ENCODE measurements at regions of chr22 and their contacts with region 1.

Region 1: GRCh38 chr22:37608477-37609239 is at the start of gene GGA1:
- DNase-seq: peak; percentile 97
- H3K4me3 Mint-ChIP-seq: peak within 1 kb of the TSS; percentile 87
- H3K27ac Mint-ChIP-seq: peak within 1 kb of the TSS; percentile 99
- H3K4me1 Mint-ChIP-seq: peaks cover 54% of the 10 kb centered on the region
- H3K27me3 Mint-ChIP-seq: no peaks in the 10 kb centered on the region
- total RNA-seq, gene GGA1: 59.0 to 61.1 TPM

Region 2: DNA sequence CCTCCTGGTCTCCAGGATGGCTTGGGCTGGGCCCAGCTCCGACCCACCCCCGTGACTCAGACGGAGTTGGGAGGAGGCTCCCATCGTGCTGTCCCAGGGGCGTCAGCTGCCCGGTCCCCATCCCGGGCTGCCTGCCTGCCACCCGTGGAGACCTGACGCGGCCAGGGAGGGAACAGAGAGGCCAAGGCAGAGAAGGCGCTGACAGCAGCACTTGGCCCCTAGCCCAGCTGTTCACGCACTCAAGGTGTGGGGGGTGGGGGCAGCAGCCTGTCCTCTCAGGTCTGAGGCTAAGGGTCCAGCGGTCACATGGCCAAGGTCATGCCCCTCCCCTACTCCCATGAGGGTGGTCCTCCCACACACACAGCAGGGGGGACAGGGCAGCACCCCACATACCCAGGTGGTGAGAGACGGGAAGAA is 230.0 kb before region 1 on chr22:
- CTCF ChIA-PET with region 1: no interaction called
- POLR2A ChIA-PET with region 1: no interaction called
- intact Hi-C with region 1: no loop called
- DNase-seq: no peak
- H3K4me3 Mint-ChIP-seq: no peak overlapping the region
- H3K27ac Mint-ChIP-seq: no peak overlapping the region
- H3K4me1 Mint-ChIP-seq: no peaks in the 10 kb centered on the region
- H3K27me3 Mint-ChIP-seq: peaks cover 33% of the 10 kb centered on the region

Region 3: DNA sequence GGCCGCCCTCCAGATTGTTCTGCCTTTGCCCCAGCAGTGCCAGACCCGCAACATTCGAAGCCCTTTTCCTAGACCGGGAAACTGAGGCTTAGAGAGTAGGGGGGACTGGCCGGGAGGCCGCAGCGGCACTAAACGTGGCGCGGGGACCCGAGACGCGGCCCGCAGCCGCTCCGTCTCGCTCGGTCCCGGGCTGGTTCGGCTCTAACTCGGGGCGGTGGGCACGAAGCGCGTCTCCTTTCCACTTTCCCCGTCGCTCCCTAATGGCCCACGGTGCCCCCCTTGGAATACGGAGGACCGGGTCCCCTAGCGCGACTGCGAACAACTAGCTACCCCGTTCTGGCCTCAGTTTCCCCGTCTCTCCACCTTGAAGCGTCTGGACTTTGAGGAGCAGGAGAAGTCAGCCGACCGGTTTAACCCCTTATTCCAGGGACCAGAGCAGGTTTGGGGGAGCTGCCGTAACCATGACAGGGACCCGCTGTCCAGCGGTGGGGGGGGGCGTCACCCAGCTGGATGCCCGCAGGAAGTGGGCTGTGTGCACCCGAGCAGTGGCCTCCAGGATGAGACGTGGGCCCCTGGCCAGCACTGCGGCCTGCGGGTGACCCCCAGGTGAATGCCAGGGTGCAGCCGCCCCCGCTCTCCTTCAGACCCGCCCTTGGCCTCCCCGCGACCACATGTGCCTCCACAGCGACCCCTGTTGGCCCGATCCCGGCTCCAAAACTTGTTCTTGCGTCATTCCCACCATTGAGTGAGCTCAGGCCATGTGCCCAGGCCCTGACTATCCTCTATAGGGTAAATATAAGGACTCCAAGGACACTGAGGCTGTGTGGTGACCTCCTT is 47.2 kb before region 1 on chr22:
- CTCF ChIA-PET with region 1: interaction called, 13 read pairs
- POLR2A ChIA-PET with region 1: interaction called, 3 read pairs
- intact Hi-C with region 1: no loop called
- DNase-seq: peak; percentile 91
- H3K4me3 Mint-ChIP-seq: peak overlapping the region; percentile 54
- H3K27ac Mint-ChIP-seq: no peak overlapping the region
- H3K4me1 Mint-ChIP-seq: peaks cover 29% of the 10 kb centered on the region
- H3K27me3 Mint-ChIP-seq: peaks cover 48% of the 10 kb centered on the region

Region 4: DNA sequence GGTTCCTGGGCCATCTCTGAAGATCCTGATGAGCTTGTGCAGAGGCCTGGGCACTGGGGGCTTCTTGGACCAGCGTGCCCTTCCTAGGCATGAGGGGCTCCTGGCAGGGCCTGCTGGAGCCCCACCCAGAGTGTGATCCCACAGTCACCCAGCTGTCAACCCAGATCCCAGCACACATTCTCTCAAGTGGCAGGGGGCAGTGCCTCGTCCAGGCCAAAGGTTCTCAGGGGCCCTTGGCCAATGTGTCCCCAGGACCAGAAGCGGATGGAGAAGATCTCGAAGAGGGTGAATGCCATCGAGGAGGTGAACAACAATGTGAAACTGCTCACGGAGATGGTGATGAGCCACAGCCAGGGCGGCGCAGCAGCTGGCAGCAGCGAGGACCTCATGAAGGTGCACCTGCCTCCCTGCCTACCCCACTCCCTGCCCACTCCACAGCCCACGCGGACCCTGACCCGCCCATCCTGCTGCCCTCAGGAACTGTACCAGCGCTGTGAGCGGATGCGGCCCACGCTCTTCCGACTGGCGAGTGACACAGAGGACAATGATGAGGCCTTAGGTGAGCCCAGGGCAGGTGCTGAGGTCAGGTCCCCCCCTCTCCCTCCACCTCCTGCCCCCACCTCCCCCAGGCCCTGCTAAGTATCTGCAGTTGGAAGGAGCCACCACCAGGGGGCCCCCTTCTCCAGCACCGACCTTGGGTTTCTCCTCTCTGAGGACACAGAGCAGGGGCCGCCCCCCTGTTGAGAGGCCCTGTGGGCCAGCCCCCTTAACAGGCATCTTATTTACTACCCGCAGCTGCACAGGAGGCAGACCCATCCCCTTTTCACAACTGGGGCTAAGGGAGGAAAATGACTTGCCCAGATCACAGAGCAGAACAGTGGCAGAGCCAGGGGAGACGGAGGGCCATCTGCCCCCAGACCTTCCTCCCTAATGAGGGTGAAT is 14.7 kb after region 1 on chr22:
- CTCF ChIA-PET with region 1: interaction called, 10 read pairs
- POLR2A ChIA-PET with region 1: interaction called, 6 read pairs
- intact Hi-C with region 1: no loop called
- DNase-seq: peak; percentile 87
- H3K4me3 Mint-ChIP-seq: no peak overlapping the region
- H3K27ac Mint-ChIP-seq: peak overlapping the region; percentile 87
- H3K4me1 Mint-ChIP-seq: peaks cover 43% of the 10 kb centered on the region
- H3K27me3 Mint-ChIP-seq: no peaks in the 10 kb centered on the region

Region 5: DNA sequence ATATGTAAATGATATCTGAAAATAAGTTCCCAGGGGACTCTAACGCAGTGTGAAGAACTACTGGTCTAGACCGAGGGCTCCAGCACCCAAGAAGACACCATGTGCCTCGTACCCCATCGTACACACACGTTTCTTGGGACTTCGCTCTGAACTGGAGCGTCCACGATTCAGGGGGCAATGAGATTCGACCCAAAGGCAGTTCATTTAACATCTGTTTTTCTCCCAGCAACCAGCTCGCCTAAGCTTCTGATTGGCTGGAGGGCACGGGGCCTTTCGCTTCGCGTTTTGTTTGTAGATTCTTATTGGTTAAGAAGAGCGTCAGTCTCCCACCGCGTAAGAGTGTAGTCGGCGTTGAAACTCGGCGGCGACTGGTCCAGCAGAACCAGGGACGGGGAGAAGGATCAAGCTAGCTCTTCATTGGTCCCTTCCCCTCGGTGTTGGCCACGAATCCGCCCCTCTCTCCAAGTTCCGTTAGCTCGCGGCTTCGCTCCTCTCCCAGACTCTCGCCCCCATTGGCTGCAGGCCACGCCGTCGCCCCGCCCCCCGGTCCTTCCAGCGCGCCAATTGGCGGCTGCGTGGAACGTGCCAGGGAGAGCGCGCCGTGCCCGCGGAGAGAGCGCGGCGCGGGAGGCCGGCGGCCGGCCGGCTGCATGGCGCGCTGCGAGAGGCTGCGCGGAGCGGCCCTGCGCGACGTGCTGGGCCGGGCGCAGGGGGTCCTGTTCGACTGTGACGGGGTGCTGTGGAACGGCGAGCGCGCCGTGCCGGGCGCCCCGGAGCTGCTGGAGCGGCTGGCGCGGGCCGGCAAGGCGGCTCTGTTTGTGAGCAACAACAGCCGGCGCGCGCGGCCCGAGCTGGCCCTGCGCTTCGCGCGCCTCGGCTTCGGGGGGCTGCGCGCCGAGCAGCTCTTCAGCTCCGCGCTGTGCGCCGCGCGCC is 49.7 kb after region 1 on chr22 and contains the start of gene PDXP:
- CTCF ChIA-PET with region 1: interaction called, 20 read pairs
- POLR2A ChIA-PET with region 1: interaction called, 5 read pairs
- intact Hi-C with region 1: loop called (anchors 1 kb)
- DNase-seq: peak; percentile 98
- H3K4me3 Mint-ChIP-seq: peak within 1 kb of the TSS; percentile 87
- H3K27ac Mint-ChIP-seq: peak within 1 kb of the TSS; percentile 72
- H3K4me1 Mint-ChIP-seq: peaks cover 31% of the 10 kb centered on the region
- H3K27me3 Mint-ChIP-seq: no peaks in the 10 kb centered on the region
- total RNA-seq, gene PDXP: 21.9 to 22.9 TPM

Region 6: GRCh38 chr22:37745548-37746365 is 137.1 kb after region 1 on chr22:
- CTCF ChIA-PET with region 1: interaction called, 4 read pairs
- POLR2A ChIA-PET with region 1: no interaction called
- intact Hi-C with region 1: loop called (anchors 2 kb)
- DNase-seq: peak; percentile 93
- H3K4me3 Mint-ChIP-seq: peak overlapping the region; percentile 80
- H3K27ac Mint-ChIP-seq: peak overlapping the region; percentile 75
- H3K4me1 Mint-ChIP-seq: peaks cover 27% of the 10 kb centered on the region
- H3K27me3 Mint-ChIP-seq: no peaks in the 10 kb centered on the region